ENCODE measurements at regions of chr1 and their contacts with region 1.

Region 1: DNA sequence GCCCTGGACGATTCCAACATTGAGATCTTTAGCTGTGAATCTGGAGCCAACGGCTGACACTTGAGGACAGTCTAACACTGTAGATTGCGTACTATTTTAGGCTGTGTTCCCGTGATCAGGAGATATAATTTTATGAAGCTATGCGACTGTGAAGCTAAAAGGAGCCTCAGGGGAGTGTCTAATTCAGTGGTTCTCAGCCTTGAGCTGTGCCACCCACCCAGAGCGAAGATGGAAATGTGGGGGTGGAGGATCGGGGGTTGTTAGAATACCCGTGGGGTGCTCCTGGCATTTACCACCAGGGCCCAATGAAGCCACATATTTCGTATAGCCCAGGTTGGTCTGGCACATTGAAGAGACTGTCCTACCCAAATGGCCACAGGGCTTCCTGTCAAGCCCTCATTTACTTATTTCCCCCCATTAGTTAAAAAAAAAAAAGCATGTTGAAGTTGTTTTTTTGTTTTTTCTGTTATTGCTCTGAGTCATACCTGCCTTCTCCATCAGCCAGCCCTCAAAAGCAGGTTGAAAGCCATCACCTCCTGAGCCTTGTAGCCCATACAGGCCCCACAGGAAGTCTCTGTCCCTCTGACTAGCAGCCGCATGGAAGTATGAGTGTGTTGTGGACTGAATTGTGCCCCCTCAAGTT is 141.7 kb downstream of the GALNT2 start:
- DNase-seq: peak; percentile 22
- H3K4me3 Mint-ChIP-seq: no peak overlapping the region
- H3K27ac Mint-ChIP-seq: peak overlapping the region; percentile 65
- H3K4me1 Mint-ChIP-seq: peaks cover 48% of the 10 kb centered on the region
- H3K27me3 Mint-ChIP-seq: no peaks in the 10 kb centered on the region

Region 2: GRCh38 chr1:230197644-230198567 is 10.8 kb before region 1 on chr1:
- CTCF ChIA-PET with region 1: interaction called, 23 read pairs
- POLR2A ChIA-PET with region 1: no interaction called
- DNase-seq: no peak
- H3K4me3 Mint-ChIP-seq: no peak overlapping the region
- H3K27ac Mint-ChIP-seq: no peak overlapping the region
- H3K4me1 Mint-ChIP-seq: peaks cover 12% of the 10 kb centered on the region
- H3K27me3 Mint-ChIP-seq: no peaks in the 10 kb centered on the region

Measured in activated CD4-positive, alpha-beta T cell treated with anti-CD3 and anti-CD28 coated beads, Interleukin-2, amount 10 ng/mL, durations not matched to agents 7 days and 5 days (primary cell).